ENCODE measurements at regions of chr10 and their contacts with region 1.

Region 1: GRCh38 chr10:36538944-36539586 is 586.3 kb upstream of the ANKRD30A start:
- DNase-seq: peak; percentile 100
- H3K4me3 ChIP-seq: no peak overlapping the region
- H3K27ac ChIP-seq: peak overlapping the region; percentile 63
- H3K4me1 ChIP-seq: peaks cover 30% of the 10 kb centered on the region
- H3K27me3 ChIP-seq: no peaks in the 10 kb centered on the region
- CTCF ChIP-seq: peak; percentile 14 to 16
- POLR2A ChIP-seq: peak; percentile 57

Region 2: GRCh38 chr10:36469585-36469984 is 69.5 kb before region 1 on chr10:
- CTCF ChIA-PET with region 1: no interaction called
- POLR2A ChIA-PET with region 1: no interaction called
- dilution Hi-C with region 1: no loop called
- intact Hi-C with region 1: no loop called
- DNase-seq: no peak
- H3K4me3 ChIP-seq: no peak overlapping the region
- H3K27ac ChIP-seq: no peak overlapping the region
- H3K4me1 ChIP-seq: no peaks in the 10 kb centered on the region
- H3K27me3 ChIP-seq: no peaks in the 10 kb centered on the region
- CTCF ChIP-seq: no peak
- POLR2A ChIP-seq: no peak

Region 3: GRCh38 chr10:36573246-36573645 is 34.2 kb after region 1 on chr10:
- CTCF ChIA-PET with region 1: no interaction called
- POLR2A ChIA-PET with region 1: no interaction called
- dilution Hi-C with region 1: no loop called
- intact Hi-C with region 1: loop called (anchors 1 kb)
- DNase-seq: peak; percentile 64
- H3K4me3 ChIP-seq: no peak overlapping the region
- H3K27ac ChIP-seq: no peak overlapping the region
- H3K4me1 ChIP-seq: peaks cover 10% of the 10 kb centered on the region
- H3K27me3 ChIP-seq: peaks cover 7 to 8% of the 10 kb centered on the region in 2 experiments
- CTCF ChIP-seq: no peak
- POLR2A ChIP-seq: no peak

Region 4: DNA sequence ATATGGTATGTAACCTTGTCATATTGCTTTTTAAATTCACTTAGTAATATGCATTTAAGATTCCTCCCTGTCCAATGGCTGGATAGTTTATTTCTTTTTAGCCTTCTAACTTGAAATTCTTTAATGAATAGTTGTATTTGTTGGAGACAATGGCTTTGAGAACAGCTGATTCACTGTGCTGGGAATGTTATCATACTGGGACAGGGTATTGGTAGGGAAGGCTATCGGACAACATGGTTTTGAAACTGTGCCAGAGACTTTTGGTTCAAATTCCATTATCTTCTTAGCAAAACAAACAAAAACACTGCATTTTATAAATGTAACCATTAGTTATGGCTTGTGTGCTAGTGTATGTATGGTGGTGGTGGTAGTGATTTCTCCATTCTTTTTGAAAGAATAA is 69.2 kb after region 1 on chr10:
- CTCF ChIA-PET with region 1: no interaction called
- POLR2A ChIA-PET with region 1: no interaction called
- dilution Hi-C with region 1: no loop called
- intact Hi-C with region 1: loop called (anchors 2 kb)
- DNase-seq: peak; percentile 91
- H3K4me3 ChIP-seq: no peak overlapping the region
- H3K27ac ChIP-seq: peak overlapping the region; percentile 75
- H3K4me1 ChIP-seq: peaks cover 36% of the 10 kb centered on the region
- H3K27me3 ChIP-seq: no peaks in the 10 kb centered on the region
- CTCF ChIP-seq: no peak
- POLR2A ChIP-seq: no peak

Region 5: DNA sequence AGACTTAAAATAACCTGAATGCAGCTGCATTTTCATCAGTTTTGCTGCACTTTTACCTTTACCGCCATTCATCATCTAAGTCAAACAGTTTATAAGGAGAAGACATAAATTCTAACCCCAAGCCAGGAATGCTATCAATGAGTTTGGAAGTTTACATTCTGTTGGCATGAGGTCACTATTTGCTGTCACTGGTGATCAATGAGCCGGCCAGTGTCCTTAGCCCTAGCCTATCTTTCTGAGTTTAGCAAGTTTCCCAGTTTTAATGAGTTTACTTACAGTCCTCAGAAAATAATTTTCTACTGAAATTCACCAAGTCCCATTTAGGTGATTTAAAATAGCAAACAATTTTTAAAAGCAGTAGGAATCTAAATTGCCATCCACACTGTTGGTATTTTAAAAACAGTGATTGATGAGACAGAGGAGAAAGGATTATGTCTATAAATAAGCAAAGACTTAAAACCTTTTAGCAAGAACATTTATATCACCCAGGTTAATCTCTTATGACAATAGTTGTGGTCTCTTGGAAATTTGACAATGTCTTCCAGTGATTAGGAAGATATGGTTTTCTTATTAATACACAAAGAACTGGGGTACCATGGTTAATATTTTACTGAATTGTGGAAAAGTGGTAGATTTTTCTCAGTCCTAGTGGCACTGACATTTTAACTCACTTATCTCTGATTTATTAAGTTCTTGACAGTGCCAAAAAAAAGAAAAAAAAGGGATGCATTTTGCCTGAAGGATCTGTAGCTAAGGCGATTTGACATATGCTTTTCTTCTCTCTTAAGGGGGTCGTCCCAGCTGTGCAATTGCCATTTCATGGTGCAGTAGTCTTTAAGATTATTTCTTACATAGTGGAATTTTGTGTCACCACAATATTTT is 142.9 kb after region 1 on chr10:
- CTCF ChIA-PET with region 1: no interaction called
- POLR2A ChIA-PET with region 1: no interaction called
- dilution Hi-C with region 1: no loop called
- intact Hi-C with region 1: no loop called
- DNase-seq: no peak
- H3K4me3 ChIP-seq: no peak overlapping the region
- H3K27ac ChIP-seq: no peak overlapping the region
- H3K4me1 ChIP-seq: no peaks in the 10 kb centered on the region
- H3K27me3 ChIP-seq: peaks cover 0 to under 1% of the 10 kb centered on the region in 2 experiments
- CTCF ChIP-seq: no peak
- POLR2A ChIP-seq: no peak